PC-3 (cell line): ENCODE measurements at regions of chr20 and their contacts with region 1.

Region 1: GRCh38 chr20:43448748-43449535 is 8.8 kb upstream of the SRSF6 start:
- DNase-seq: peak; percentile 74
- ATAC-seq: peak; percentile 82
- H3K4me3 ChIP-seq: no peak overlapping the region
- H3K27ac ChIP-seq: no peak overlapping the region
- H3K4me1 ChIP-seq: no peaks in the 10 kb centered on the region
- H3K27me3 ChIP-seq: no peaks in the 10 kb centered on the region; the same call in 1 of the 2 replicates
- CTCF ChIP-seq: peak; percentile 88

Region 2: DNA sequence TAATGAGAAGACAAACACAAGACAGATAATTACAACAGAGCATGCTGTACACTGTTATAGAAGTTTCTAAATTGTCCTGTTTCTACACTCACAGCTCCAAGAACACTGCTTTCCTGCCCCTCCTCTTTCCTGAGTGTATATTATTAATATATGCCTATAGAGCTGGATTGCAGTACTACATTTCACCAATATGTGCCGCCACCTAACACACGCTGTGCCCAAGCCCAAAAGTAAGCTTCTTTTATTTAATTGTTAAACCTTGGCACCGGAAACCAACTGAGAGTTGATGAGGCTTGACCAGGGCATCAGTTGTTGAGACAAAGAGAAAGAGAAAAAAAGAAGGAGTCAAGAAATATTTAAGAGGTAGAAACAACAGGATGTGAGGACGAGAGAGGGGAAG is 243.2 kb before region 1 on chr20:
- CTCF ChIA-PET with region 1: no interaction called
- POLR2A ChIA-PET with region 1: no interaction called
- intact Hi-C with region 1: no loop called
- DNase-seq: no peak
- ATAC-seq: no peak
- H3K4me3 ChIP-seq: no peak overlapping the region
- H3K27ac ChIP-seq: no peak overlapping the region
- H3K4me1 ChIP-seq: no peaks in the 10 kb centered on the region
- H3K27me3 ChIP-seq: peaks cover 30% of the 10 kb centered on the region
- CTCF ChIP-seq: no peak; the same call in 1 of the 2 replicates

Region 3: DNA sequence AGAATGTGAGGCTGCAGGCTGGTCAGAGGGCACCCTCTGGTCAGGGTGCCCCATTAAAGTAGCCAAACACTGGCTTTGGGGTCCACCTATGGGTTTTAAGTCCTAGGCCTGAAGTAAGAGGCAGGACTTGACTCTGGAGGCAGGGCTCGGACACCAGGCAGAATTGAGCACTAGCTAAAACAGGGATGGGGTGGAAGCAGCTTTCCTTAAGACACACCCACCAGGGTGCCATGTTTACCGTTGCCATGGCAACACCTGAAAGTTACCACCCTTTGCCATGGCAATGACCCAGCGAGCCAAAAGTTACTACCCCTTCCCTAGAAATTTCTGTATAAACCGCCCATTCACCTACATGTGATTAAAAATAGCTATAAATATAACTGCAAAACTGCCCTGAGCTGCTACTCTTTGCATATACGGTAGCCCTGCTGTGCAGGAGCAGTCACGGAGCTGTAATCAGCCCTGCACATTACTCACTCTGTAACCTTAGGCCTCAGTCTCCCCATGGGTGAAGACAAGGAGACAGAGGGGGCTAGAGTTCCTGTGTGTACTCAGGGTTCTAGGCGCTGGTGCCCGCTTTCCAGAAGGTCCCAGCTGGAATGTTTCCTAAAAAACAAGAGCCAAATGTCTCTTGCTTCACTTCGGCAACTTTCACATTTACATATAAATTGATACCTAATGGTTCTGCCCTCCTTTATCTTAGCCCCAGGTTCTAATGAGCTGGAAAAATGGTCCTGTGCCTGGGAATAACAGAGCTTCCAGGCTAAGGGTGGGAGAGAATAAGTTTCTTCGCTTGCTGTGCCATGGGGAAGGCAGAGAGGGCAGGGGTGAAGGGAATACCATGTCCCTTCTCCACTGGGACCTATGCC is 18.4 kb before region 1 on chr20:
- CTCF ChIA-PET with region 1: no interaction called
- POLR2A ChIA-PET with region 1: no interaction called
- intact Hi-C with region 1: no loop called
- DNase-seq: no peak
- ATAC-seq: no peak
- H3K4me3 ChIP-seq: no peak overlapping the region
- H3K27ac ChIP-seq: no peak overlapping the region
- H3K4me1 ChIP-seq: no peaks in the 10 kb centered on the region
- H3K27me3 ChIP-seq: peaks cover 33% of the 10 kb centered on the region
- CTCF ChIP-seq: no peak

Region 4: GRCh38 chr20:43514062-43514999 is 65.4 kb after region 1 on chr20:
- CTCF ChIA-PET with region 1: interaction called, 12 read pairs
- POLR2A ChIA-PET with region 1: interaction called, 4 read pairs
- intact Hi-C with region 1: loop called (anchors 1 kb)
- DNase-seq: peak; percentile 99
- ATAC-seq: peak; percentile 88
- H3K4me3 ChIP-seq: peak overlapping the region; percentile 78
- H3K27ac ChIP-seq: 0 out of 2 replicates have a peak overlapping the region, but pooled peaks have one; percentile 7
- H3K4me1 ChIP-seq: peaks cover 16% of the 10 kb centered on the region; the same call in 1 of the 2 replicates
- H3K27me3 ChIP-seq: no peaks in the 10 kb centered on the region
- CTCF ChIP-seq: peak; percentile 48; the same call in 1 of the 2 replicates

Region 5: DNA sequence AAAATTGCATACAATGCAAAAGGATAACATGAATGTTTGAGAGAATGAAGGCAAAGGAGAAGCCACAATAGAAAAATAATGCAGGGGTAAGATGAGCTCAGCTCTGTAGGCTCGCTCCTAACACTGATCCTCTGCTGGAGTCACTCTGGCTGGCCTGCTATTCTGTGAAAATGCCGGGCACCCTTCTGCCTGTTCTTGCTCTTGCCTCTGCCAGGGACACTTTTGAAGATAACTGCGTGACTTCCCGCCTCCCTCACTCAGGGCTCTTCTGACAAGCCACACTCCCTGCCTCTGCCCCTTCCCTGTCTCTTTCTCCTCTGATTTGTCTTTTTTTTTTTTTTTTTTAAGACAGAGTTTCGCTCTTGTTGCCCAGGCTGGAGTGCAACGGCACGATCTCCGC is 182.7 kb after region 1 on chr20:
- CTCF ChIA-PET with region 1: no interaction called
- POLR2A ChIA-PET with region 1: no interaction called
- intact Hi-C with region 1: no loop called
- DNase-seq: no peak
- ATAC-seq: no peak
- H3K4me3 ChIP-seq: no peak overlapping the region
- H3K27ac ChIP-seq: no peak overlapping the region
- H3K4me1 ChIP-seq: no peaks in the 10 kb centered on the region
- H3K27me3 ChIP-seq: no peaks in the 10 kb centered on the region
- CTCF ChIP-seq: no peak

Region 6: GRCh38 chr20:43691928-43692524 is 243.1 kb after region 1 on chr20:
- CTCF ChIA-PET with region 1: interaction called, 11 read pairs
- POLR2A ChIA-PET with region 1: no interaction called
- intact Hi-C with region 1: loop called (anchors 1 kb)
- DNase-seq: peak; percentile 65
- ATAC-seq: peak; percentile 80
- H3K4me3 ChIP-seq: no peak overlapping the region
- H3K27ac ChIP-seq: no peak overlapping the region
- H3K4me1 ChIP-seq: no peaks in the 10 kb centered on the region
- H3K27me3 ChIP-seq: no peaks in the 10 kb centered on the region
- CTCF ChIP-seq: peak; percentile 87

Region 7: DNA sequence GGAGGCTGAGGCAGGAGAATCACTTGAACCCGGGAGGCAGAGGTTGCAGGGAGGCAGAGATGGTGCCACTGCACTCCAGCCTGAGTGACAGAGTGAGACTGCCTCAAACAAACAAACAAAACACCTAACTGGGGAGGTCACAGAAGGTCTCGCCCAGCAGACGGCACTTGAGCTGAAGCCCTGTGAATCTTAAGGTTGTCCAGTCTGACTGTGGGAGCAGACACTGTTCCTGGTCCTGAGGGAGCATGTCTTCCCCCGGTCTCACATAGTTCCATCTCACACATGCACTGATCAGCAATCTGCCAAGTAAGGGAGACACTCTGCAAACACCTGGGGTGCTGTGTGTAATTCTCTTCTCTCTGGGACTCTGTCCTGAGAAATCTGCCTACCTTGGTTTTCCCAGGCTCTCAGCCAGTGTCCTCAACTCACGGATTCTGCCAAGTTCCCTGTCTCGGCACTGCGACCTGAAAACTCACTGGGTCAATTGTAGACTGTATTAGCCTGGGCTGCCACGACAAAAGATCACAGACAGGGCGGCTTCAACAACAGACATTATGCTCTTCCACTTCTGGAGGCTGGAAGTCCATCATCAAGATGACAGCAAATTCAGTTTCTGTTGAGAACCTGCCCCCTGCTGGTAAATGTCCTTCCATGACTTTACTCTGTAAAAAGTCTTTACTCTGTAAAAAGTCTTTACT is 643.8 kb after region 1 on chr20:
- CTCF ChIA-PET with region 1: no interaction called
- POLR2A ChIA-PET with region 1: no interaction called
- intact Hi-C with region 1: loop called (anchors 5 kb)
- DNase-seq: peak; percentile 82
- ATAC-seq: peak; percentile 75
- H3K4me3 ChIP-seq: no peak overlapping the region
- H3K27ac ChIP-seq: no peak overlapping the region
- H3K4me1 ChIP-seq: peaks cover 5% of the 10 kb centered on the region
- H3K27me3 ChIP-seq: no peaks in the 10 kb centered on the region
- CTCF ChIP-seq: peak; percentile 89